Lower leg skin (tissue), 4 donors: ENCODE measurements at regions of chr12 and their contacts with region 1.

Region 1: GRCh38 chr12:69415471-69416275 is 54.5 kb upstream of the FRS2 start:
- DNase-seq: peak; percentile 51 to 86
- H3K4me3 ChIP-seq: no peak overlapping the region
- CTCF ChIP-seq: peak in 1 of 3 donors; percentile 55
- POLR2A ChIP-seq: no peak

Region 2: DNA sequence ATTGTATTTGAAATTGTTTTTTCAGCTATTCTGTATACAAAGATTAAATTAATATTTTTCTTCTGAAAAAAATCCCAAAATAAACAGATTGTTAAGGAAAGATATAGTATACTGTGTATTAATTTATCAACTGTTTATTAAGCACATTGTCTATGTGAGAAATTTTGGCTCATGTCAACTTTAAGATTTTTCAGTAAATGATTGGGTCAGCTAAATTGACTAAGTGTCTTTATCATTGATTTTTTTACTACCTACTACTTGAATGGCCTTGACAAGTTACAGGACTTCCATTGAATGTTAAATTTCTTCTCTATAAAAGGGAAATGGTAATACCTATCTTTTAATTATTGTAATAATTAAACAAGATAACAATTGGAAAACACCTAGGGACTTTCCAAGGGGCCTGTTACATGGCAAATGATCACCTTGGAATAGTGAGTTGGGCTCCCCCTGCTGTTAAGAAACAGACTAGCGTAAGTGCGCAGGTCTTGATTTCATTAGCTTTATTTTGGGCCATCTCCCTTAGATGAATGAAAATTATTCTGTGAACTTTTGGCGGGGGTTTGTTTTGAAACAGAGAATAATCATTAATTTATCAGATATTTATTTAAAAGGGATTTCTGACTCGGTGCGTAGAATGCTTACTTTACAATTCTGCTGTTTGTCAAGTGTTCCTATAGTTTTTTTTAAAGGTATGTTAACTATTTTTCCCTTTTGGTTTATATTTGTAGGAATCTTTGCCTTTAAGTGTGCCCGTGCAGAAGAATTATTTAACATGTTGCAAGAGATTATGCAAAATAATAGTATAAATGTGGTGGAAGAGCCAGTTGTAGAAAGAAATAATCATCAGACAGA is 155.1 kb after region 1 on chr12:
- intact Hi-C with region 1: loop called (anchors 10 kb)
- DNase-seq: peak in 1 of 2 donors; percentile 56
- H3K4me3 ChIP-seq: no peak overlapping the region
- CTCF ChIP-seq: peak in 1 of 3 donors; percentile 19
- POLR2A ChIP-seq: no peak